CD8-positive, alpha-beta T cell (primary cell): ENCODE measurements at regions of chr14 and their contacts with region 1.

Region 1: GRCh38 chr14:68926236-68926635 is 52.9 kb downstream of the ACTN1 start:
- DNase-seq: peak in 1 of 9 experiments; percentile 36
- ATAC-seq: no peak
- H3K4me3 ChIP-seq: no peak overlapping the region
- H3K4me3 Mint-ChIP-seq: no peak overlapping the region
- H3K27ac ChIP-seq: no peak overlapping the region
- H3K27ac Mint-ChIP-seq: peak overlapping the region; percentile 86
- H3K4me1 ChIP-seq: peaks cover 81% of the 10 kb centered on the region
- H3K4me1 Mint-ChIP-seq: peaks cover 73% of the 10 kb centered on the region
- H3K27me3 ChIP-seq: no peaks in the 10 kb centered on the region
- H3K27me3 Mint-ChIP-seq: no peaks in the 10 kb centered on the region
- CTCF ChIP-seq: peak; percentile 21

Region 2: DNA sequence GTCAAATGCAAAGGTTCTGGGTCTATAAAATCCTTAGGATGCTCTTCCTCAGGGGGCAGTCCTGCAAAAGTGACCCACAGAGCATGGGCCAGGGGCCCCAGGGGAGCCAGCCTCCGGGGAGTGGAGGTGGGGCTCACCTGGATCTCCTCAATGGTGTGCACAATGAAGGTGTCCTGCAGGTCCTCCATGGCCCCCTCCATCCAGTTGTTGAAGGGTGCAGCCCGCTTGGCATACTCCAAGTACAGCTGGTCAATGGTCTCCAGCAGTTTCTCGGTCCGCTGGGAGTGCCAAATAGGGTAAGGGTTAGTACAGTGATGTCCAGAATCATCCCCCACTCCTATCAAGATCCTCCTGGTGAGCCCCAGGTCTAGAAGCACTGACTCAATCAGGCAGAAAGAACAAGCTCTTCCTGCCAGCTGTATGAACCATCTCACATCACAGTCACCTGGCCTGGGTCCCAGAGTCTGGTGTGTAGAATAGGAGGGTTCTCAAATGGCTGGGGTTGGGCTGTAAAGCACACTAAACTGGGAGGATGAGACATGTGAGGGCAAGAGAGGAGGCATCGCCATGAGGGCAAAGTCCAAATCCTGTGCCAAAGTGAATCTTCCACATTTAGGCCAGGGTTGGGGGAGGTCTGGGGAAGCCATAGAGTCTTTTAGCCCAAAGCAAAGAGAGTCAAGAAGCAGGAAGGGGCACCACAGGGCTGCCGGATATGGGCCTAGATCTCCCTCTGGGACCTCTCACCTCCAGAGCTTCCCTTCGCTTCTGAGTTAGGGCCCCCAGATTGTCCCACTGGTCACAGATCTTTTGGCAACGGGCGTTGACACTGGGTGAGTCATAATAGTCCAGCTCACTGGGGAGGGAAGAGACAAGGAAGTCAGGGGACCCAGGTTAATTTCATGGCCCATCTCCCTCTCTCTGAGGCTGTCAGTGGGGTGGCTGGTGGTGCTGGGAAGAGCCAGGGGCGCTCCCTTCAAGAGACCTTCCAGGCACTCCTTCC is 41.9 kb before region 1 on chr14:
- CTCF ChIA-PET with region 1: no interaction called
- POLR2A ChIA-PET with region 1: no interaction called
- intact Hi-C with region 1: no loop called
- DNase-seq: no peak
- ATAC-seq: no peak
- H3K4me3 ChIP-seq: no peak overlapping the region
- H3K4me3 Mint-ChIP-seq: no peak overlapping the region
- H3K27ac ChIP-seq: no peak overlapping the region
- H3K27ac Mint-ChIP-seq: no peak overlapping the region
- H3K4me1 ChIP-seq: no peaks in the 10 kb centered on the region
- H3K4me1 Mint-ChIP-seq: no peaks in the 10 kb centered on the region
- H3K27me3 ChIP-seq: no peaks in the 10 kb centered on the region
- H3K27me3 Mint-ChIP-seq: no peaks in the 10 kb centered on the region
- CTCF ChIP-seq: no peak

Region 3: GRCh38 chr14:69005432-69006147 is 79.4 kb after region 1 on chr14:
- CTCF ChIA-PET with region 1: interaction called, 15 read pairs
- POLR2A ChIA-PET with region 1: no interaction called
- intact Hi-C with region 1: no loop called
- DNase-seq: no peak
- ATAC-seq: no peak
- H3K4me3 ChIP-seq: no peak overlapping the region
- H3K4me3 Mint-ChIP-seq: no peak overlapping the region
- H3K27ac ChIP-seq: no peak overlapping the region
- H3K27ac Mint-ChIP-seq: no peak overlapping the region
- H3K4me1 ChIP-seq: peaks cover 2% of the 10 kb centered on the region
- H3K4me1 Mint-ChIP-seq: peaks cover 3% of the 10 kb centered on the region
- H3K27me3 ChIP-seq: no peaks in the 10 kb centered on the region
- H3K27me3 Mint-ChIP-seq: no peaks in the 10 kb centered on the region
- CTCF ChIP-seq: no peak